H1 (cell line): ENCODE measurements at regions of chr14 and their contacts with region 1.

Region 1: DNA sequence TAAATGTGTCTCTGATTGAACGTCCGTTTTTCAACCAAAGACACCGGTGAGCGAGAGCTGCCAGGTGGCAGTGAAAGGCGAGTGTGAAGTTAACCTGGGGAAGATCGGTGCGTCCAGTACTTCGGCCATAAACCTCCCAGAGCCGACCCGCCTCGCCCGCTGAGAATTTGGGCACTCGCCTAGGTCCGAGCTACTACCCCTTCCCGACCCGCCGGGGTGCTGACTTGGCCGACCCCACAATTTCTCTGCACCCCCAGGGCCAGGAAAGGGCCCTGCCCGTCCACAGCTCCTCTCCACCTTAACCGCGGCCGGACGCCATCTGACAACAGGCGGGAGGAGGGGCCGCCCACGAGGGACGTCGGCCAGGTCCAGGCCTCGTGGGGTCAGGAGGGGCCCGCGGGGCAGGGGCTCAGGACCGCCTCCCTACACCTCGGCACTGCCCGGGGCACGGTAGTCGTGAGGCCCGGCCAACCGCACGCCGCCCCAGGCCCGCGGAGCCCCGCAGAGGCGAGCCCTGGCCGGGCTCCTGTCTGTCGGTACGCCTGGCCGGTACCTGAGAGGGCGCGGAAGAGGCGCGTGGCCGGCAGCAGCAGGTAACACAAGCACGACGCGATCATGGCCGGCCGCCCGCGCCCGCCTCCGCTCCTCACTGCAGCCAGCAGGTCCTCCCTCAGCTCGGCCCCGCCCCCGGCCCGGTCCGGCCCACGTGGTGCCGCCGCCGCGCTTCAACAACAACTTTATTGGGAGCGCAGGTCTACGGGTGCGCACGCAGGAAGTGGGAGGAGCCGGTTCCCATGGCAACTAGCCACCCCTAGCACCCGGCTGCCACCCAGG is at the start of gene ANGEL1:
- DNase-seq: peak; percentile 82 to 97
- H3K4me3 ChIP-seq: peak within 1 kb of the TSS; percentile 74 to 82 (median 80)
- H3K27ac ChIP-seq: peak within 1 kb of the TSS; percentile 76
- H3K4me1 ChIP-seq: peaks cover 2 to 9% (median 3%) of the 10 kb centered on the region in 4 experiments; a peak in 3 of 7 replicates
- H3K27me3 ChIP-seq: no peaks in the 10 kb centered on the region; a peak in 2 of 7 replicates
- CTCF ChIP-seq: no peak
- EP300 ChIP-seq: peak; percentile 6 to 88; a peak in 2 of 3 replicates
- POLR2A ChIP-seq: peak; percentile 76 to 90
- RAD21 ChIP-seq: no peak
- total RNA-seq, gene ANGEL1: 23.1 and 26.8 TPM in 2 replicates

Region 2: DNA sequence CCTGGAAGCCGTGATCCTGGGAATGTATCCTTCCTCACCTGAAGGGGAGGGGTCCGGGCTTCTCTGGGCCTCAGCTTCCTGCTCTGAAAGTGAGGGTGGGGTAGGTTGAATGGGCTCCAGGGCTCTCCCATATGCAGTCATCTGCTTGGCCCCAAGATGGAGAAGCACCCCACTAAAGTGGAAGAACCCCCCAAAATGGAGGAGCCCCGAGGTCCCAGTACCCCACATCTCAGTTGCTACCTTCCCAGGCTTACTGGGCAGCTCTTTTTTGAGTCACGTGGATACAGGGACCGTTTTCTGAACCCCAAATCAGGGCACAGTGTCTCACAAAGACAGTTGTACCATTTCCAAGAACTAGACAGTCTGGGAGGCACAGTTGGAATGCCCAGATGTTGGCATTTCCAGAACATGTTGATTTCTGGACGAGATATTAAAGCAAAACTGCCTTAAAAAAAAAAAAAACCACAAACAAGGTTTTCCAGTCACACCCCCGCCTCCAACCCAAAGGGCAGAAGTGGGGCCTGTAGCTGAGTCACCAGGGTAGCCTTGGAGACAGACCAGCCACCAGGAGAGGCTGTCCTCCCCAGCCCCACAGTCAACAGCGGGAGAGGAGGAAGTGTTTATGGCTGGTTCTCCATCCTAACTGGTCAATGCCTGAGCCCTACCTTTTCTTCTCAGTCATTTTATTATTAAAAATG is 39.1 kb before region 1 on chr14:
- CTCF ChIA-PET with region 1: interaction called, 7 read pairs
- POLR2A ChIA-PET with region 1: interaction called, 11 read pairs
- DNase-seq: no peak
- H3K4me3 ChIP-seq: no peak overlapping the region
- H3K27ac ChIP-seq: no peak overlapping the region
- H3K4me1 ChIP-seq: peaks cover 0 to 21% (median 11%) of the 10 kb centered on the region in 4 experiments; a peak in 5 of 7 replicates
- H3K27me3 ChIP-seq: peaks cover 0 to 5% (median 2%) of the 10 kb centered on the region in 4 experiments; a peak in 4 of 7 replicates
- CTCF ChIP-seq: no peak
- EP300 ChIP-seq: no peak
- POLR2A ChIP-seq: no peak
- RAD21 ChIP-seq: no peak

Region 3: GRCh38 chr14:76855066-76855465 is 42.6 kb after region 1 on chr14:
- CTCF ChIA-PET with region 1: no interaction called
- POLR2A ChIA-PET with region 1: no interaction called
- DNase-seq: no peak
- H3K4me3 ChIP-seq: no peak overlapping the region
- H3K27ac ChIP-seq: no peak overlapping the region
- H3K4me1 ChIP-seq: no peaks in the 10 kb centered on the region; a peak in 1 of 7 replicates
- H3K27me3 ChIP-seq: no peaks in the 10 kb centered on the region
- CTCF ChIP-seq: no peak
- EP300 ChIP-seq: no peak
- POLR2A ChIP-seq: no peak
- RAD21 ChIP-seq: no peak